Sciatic nerve (tissue), 2 donors: ENCODE measurements at regions of chr13 and their contacts with region 1.

Region 1: DNA sequence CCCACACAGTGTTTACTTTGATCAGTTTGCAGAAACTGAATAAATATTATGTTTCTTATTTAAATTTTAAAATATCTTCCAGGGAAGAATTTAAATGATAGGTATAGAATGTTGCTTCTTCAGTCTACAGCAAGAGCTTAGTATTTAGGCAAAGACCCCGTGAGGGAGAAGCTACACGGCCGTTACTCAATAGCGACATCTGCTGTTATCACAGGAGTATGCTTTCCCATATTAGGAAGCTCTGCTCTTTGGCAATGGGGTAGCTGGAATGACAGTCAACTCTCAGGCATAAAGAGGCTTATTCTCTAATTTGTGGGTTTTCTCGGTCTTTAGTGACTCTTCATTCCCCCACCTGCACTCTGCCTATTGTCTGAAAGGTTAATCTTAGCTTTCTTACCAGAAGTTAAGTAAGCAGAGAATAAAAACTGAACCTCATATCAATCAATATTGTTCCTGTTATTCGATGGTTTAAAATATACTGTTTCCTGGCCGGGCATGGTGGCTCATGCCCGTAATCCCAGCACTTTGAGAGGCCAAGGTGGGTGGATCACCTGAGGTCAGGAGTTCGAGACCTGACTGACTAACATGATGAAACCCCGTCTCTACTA is 13.2 kb upstream of the LHFPL6 start:
- DNase-seq: peak; percentile 65
- ATAC-seq: peak; percentile 86

Region 2: DNA sequence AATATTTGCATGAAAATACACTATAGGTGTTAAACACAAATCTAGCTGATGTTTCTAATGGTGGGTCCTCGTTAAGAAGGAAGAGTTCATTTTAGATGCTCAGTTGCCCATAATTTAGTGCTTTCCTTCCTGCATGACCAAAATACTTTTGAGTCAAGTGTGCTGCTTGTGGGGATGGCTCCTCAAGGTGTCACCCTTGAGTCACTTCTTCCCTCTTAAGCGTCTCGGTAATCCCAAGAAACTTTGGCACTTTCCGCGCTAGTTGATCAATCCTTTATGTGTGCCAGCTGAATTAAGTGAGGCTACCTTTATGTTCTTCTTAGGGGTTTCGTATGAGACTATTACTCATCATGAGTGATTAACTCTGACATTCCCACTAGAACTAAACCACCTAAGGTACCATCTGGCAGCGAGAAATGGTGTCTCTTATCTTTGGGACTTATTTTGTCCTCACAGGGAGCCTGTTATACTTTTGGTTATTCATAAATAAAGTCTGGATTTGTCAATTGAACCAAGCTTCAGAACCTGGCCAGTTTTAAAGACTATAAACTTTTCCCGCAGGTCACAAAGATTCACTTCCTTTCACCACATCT is 471.2 kb before region 1 on chr13:
- intact Hi-C with region 1: loop called (anchors 10 kb)
- DNase-seq: peak; percentile 75
- ATAC-seq: peak; percentile 81